Heart right ventricle (tissue), 16 donors: ENCODE measurements at regions of chr1 and their contacts with region 1.

Region 1: DNA sequence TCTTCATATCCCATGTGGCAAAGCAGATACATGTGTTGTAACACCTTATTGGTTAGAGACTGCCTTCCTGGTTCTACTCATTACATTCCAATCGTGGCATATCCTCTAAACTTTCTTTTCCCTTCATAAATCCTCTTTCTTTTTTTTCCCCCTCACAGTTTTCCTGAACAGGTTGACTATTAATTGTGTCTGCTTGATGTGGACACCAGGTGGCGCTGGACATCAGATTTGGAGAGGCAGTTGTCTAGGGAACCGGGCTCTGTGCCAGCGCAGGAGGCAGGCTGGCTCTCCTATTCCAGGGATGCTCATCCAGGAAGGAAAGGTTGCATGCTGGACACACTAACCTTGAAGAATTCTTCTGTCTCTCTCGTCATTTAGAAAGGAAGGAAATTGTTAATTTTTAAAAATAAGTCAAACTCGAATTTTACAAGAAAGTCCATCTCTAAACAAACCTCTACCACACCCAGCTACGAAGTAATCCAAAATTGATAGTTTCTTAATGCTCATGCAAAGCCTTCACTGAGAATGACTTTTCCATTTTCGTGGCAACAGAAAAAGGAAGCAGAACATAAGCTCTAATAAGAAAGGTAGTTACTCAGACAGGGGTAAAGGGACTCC is 59.4 kb upstream of the ASB17 start:
- DNase-seq: peak; percentile 83 to 88
- ATAC-seq: peak in 5 of 8 donors; percentile 61 to 76 (median 74)
- H3K4me3 ChIP-seq: no peak overlapping the region
- H3K27ac ChIP-seq: no peak overlapping the region
- H3K4me1 ChIP-seq: no peaks in the 10 kb centered on the region
- H3K27me3 ChIP-seq: peaks cover 0 to 26% (median 12%) of the 10 kb centered on the region in 7 donors
- CTCF ChIP-seq: peak; percentile 67 to 89 (median 80)

Region 2: GRCh38 chr1:76140227-76140626 is 148.6 kb after region 1 on chr1:
- intact Hi-C with region 1: loop called in 1 of 10 experiments (anchors 10 kb)
- DNase-seq: no peak
- ATAC-seq: no peak
- H3K4me3 ChIP-seq: no peak overlapping the region
- H3K27ac ChIP-seq: peak overlapping the region in 9 of 10 donors; percentile 60 to 79 (median 75)
- H3K4me1 ChIP-seq: peaks cover 0 to 62% (median 24%) of the 10 kb centered on the region in 9 donors
- H3K27me3 ChIP-seq: no peaks in the 10 kb centered on the region
- CTCF ChIP-seq: peak in 1 of 9 donors; percentile 17

Region 3: DNA sequence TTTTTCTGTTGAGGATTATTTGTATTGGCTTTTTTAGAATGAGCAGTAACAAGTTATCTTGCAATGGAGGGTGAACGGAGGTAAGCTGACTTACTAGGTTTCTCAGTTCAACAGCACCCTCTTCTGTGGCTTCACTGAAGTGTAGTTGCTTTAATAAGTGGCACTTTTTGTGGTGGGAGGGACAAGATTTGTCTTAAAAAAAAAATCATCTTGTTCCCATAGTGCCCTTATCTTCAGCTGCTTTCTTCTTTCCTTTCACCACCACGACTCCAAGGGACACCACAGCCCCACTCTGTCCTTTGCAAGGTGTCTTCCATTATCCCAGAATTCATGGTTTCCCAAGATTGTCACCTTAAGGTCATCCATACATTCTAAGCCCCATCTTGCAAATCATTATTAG is 1134.7 kb after region 1 on chr1:
- intact Hi-C with region 1: loop called in 2 of 10 experiments (anchors 10 kb)
- DNase-seq: peak in 1 of 2 donors; percentile 17
- ATAC-seq: peak in 2 of 8 donors; percentile 50 to 63
- H3K4me3 ChIP-seq: no peak overlapping the region
- H3K27ac ChIP-seq: no peak overlapping the region
- H3K4me1 ChIP-seq: no peaks in the 10 kb centered on the region
- H3K27me3 ChIP-seq: no peaks in the 10 kb centered on the region
- CTCF ChIP-seq: peak in 7 of 9 donors; percentile 42 to 58 (median 52)

Region 4: DNA sequence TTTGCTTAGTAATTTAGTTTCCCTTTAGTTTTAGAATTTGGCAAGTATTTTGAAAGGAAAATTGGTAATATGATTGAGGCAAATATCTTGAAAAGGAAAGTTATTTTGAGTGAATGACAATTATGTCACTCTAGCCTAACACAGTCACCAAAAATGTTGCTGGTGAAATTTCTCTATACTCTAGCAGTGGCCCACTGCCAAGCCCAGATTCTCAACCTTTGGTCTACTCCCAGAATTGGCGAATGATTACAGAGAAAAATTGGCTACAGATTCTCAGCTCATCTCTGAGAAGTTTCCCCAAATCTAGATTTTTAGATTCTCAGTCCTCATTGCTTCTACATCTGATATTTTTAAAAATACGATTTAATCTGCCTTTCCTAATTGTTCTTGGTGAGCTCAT is 1142.8 kb after region 1 on chr1:
- intact Hi-C with region 1: loop called in 2 of 10 experiments (anchors 10 kb)
- DNase-seq: no peak
- ATAC-seq: no peak
- H3K4me3 ChIP-seq: no peak overlapping the region
- H3K27ac ChIP-seq: no peak overlapping the region
- H3K4me1 ChIP-seq: peaks cover 0 to 11% (median 0%) of the 10 kb centered on the region in 9 donors
- H3K27me3 ChIP-seq: no peaks in the 10 kb centered on the region
- CTCF ChIP-seq: no peak

Region 5: DNA sequence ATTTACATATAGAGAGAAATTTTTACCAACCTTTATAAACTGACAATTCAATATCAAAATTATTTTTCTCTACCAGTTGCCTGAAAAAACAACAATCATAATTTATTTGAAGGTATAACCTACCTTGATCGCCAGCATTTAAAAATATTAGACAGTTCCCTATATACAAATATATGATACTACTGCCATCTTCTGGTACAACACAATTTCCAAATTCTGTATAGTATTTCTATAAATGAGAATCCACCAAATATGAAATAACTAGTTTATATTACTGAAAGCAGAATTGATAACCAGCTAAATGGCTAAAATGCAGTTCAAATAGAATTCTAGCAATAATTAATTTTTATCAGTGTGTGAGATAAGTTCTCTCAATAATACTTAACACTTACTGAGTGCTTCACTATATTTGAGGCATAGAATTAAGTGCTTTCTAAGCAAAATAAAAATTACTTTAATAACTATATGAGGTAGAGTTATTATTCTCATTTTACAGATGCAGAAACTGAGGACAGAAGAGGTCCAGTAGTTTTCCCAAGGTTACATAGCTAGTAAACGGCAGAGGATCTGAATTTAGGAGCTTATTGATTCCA is 1152.0 kb after region 1 on chr1:
- intact Hi-C with region 1: loop called in 2 of 10 experiments (anchors 5 to 10 kb)
- DNase-seq: no peak
- ATAC-seq: no peak
- H3K4me3 ChIP-seq: no peak overlapping the region
- H3K27ac ChIP-seq: no peak overlapping the region
- H3K4me1 ChIP-seq: no peaks in the 10 kb centered on the region
- H3K27me3 ChIP-seq: no peaks in the 10 kb centered on the region
- CTCF ChIP-seq: peak in 7 of 9 donors; percentile 15 to 51 (median 40)